Esophagus muscularis mucosa (tissue), 4 donors: ENCODE measurements at regions of chr9 and their contacts with region 1.

Region 1: GRCh38 chr9:131349881-131350563 is 43.9 kb upstream of the PRRC2B start:
- DNase-seq: peak; percentile 97
- H3K4me3 ChIP-seq: peak overlapping the region; percentile 30 to 44 (median 36)
- H3K27ac ChIP-seq: no peak overlapping the region
- H3K4me1 ChIP-seq: peaks cover 3 to 13% (median 10%) of the 10 kb centered on the region in 4 donors
- H3K27me3 ChIP-seq: peaks cover 0 to 17% (median 2%) of the 10 kb centered on the region in 4 donors
- CTCF ChIP-seq: peak; percentile 84 to 89 (median 88)
- EP300 ChIP-seq: no peak
- POLR2A ChIP-seq: no peak

Region 2: DNA sequence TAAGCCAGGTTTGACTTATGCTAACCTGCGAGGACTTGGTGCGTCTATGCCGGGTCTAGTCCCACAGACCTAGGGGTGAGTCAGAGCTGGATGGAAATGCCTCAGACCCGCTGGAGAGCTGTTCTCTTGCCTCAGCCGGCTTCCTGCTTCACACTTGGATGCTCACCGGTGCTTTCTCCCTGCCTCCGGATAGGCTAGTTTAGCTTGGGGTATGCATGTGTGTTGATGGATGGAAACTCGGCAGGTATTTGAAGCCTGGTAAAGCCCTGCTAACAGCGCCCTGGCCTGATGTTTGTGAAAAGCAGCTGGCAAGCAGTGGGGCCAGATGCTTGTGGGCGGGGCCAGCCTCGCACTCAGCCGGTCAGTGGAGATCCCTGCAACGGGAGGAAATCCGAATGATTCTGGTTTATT is 73.2 kb after region 1 on chr9:
- intact Hi-C with region 1: loop called (anchors 5 kb)
- DNase-seq: no peak
- H3K4me3 ChIP-seq: peak overlapping the region; percentile 11 to 42 (median 20)
- H3K27ac ChIP-seq: peak overlapping the region; percentile 72 to 83 (median 80)
- H3K4me1 ChIP-seq: peaks cover 73 to 94% (median 78%) of the 10 kb centered on the region in 4 donors
- H3K27me3 ChIP-seq: no peaks in the 10 kb centered on the region
- CTCF ChIP-seq: no peak
- EP300 ChIP-seq: no peak
- POLR2A ChIP-seq: no peak

Region 3: GRCh38 chr9:131478421-131478868 is 128.4 kb after region 1 on chr9:
- intact Hi-C with region 1: loop called (anchors 5 kb)
- DNase-seq: no peak
- H3K4me3 ChIP-seq: no peak overlapping the region
- H3K27ac ChIP-seq: peak overlapping the region in 1 of 4 donors; percentile 30
- H3K4me1 ChIP-seq: peaks cover 29 to 37% (median 36%) of the 10 kb centered on the region in 4 donors
- H3K27me3 ChIP-seq: no peaks in the 10 kb centered on the region
- CTCF ChIP-seq: peak; percentile 18 to 69 (median 57)
- EP300 ChIP-seq: no peak
- POLR2A ChIP-seq: no peak

Region 4: GRCh38 chr9:131739980-131740648 is 390.1 kb after region 1 on chr9 and contains the start of gene RAPGEF1:
- intact Hi-C with region 1: loop called (anchors 10 kb)
- DNase-seq: no peak
- H3K4me3 ChIP-seq: peak within 1 kb of the TSS; percentile 60 to 94 (median 72)
- H3K27ac ChIP-seq: peak within 1 kb of the TSS; percentile 86 to 97 (median 88)
- H3K4me1 ChIP-seq: peaks cover 38 to 46% (median 43%) of the 10 kb centered on the region in 4 donors
- H3K27me3 ChIP-seq: no peaks in the 10 kb centered on the region
- CTCF ChIP-seq: peak; percentile 80 to 96 (median 87)
- EP300 ChIP-seq: no peak
- POLR2A ChIP-seq: no peak
- total RNA-seq, gene RAPGEF1: 66.6 to 138 (median 101) TPM